PC-9 (cell line): ENCODE measurements at regions of chr2 and their contacts with region 1.

Region 1: GRCh38 chr2:185531721-185532120 is 206.9 kb upstream of the FSIP2 start:
- DNase-seq: no peak
- H3K4me3 ChIP-seq: no peak overlapping the region
- H3K27ac ChIP-seq: no peak overlapping the region
- H3K4me1 ChIP-seq: no peaks in the 10 kb centered on the region
- H3K27me3 ChIP-seq: no peaks in the 10 kb centered on the region
- CTCF ChIP-seq: no peak

Region 2: DNA sequence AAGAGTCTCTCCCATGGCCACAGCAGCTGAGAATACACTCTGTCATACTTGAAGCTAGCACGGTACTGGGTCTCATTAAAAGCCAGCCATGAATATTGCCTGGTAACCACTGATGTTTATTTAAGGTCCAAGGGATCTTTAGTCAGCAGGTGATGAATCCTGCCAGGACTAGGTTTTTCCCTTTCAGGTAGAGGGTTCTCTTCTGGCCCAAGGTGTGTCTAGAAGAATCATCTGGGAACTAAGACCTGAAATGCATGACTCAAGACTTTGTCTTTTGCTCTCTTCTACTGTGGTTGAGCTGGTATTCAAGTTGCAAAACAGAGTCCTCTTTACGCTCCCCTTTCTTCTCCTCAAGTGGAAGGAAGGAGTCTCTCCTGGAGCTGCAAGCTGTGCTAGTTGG is 193.6 kb before region 1 on chr2:
- CTCF ChIA-PET with region 1: no interaction called
- POLR2A ChIA-PET with region 1: no interaction called
- intact Hi-C with region 1: loop called (anchors 5 kb)
- DNase-seq: no peak
- H3K4me3 ChIP-seq: no peak overlapping the region
- H3K27ac ChIP-seq: no peak overlapping the region
- H3K4me1 ChIP-seq: no peaks in the 10 kb centered on the region
- H3K27me3 ChIP-seq: no peaks in the 10 kb centered on the region
- CTCF ChIP-seq: no peak